ENCODE measurements at regions of chr14 and their contacts with region 1.

Region 1: DNA sequence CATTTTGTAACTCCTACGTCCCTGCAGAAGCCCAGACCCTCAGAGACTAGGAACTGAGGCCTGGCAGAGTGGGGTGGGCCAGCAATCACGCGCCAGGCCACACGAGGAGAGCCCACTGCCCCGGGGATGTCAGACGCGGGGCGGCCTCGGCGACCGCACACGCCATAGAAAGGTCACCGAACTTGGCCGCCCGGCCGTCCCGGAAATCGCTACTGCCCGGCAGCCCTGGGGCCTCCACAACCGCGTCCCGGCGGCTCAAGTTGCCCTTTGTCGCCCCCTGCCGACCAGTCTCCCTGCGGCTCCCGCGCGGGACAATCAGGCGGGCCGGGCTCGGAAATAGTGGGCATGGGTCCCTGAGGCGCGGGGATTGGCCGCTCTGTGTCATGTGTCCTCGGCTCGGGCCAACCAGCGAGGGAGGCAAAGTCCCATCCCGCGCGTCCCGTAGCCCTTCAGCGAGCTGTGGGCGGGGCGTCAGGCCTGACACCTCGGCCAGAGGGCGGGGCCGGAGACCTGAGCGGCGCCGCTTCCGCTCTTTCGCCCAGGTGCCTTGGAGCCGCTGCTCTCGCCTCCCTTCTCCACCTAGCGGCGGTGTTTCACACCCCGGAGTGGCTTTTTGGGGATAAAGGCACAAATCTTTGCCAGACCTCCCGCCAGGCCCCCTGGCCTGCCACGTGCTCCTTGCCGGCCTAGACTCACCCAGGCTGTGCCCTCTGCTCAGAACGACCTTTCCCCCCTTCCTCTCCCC is 33.4 kb upstream of the DEGS2 start:
- DNase-seq: peak; percentile 99
- H3K4me3 ChIP-seq: peak overlapping the region; percentile 36
- H3K4me3 Mint-ChIP-seq: peak overlapping the region; percentile 71
- H3K27ac Mint-ChIP-seq: peak overlapping the region; percentile 86
- H3K4me1 ChIP-seq: peaks cover 10% of the 10 kb centered on the region
- H3K4me1 Mint-ChIP-seq: peaks cover 6% of the 10 kb centered on the region
- H3K27me3 ChIP-seq: no peaks in the 10 kb centered on the region
- H3K27me3 Mint-ChIP-seq: no peaks in the 10 kb centered on the region
- CTCF ChIP-seq: peak; percentile 72 to 82

Region 2: GRCh38 chr14:99982537-99983250 is 210.2 kb before region 1 on chr14:
- CTCF ChIA-PET with region 1: interaction called, 9 read pairs
- POLR2A ChIA-PET with region 1: no interaction called
- intact Hi-C with region 1: loop called (anchors 1 kb)
- DNase-seq: peak in 1 of 2 experiments; percentile 67
- H3K4me3 ChIP-seq: no peak overlapping the region
- H3K4me3 Mint-ChIP-seq: no peak overlapping the region
- H3K27ac Mint-ChIP-seq: no peak overlapping the region
- H3K4me1 ChIP-seq: no peaks in the 10 kb centered on the region
- H3K4me1 Mint-ChIP-seq: peaks cover 7% of the 10 kb centered on the region
- H3K27me3 ChIP-seq: no peaks in the 10 kb centered on the region
- H3K27me3 Mint-ChIP-seq: no peaks in the 10 kb centered on the region
- CTCF ChIP-seq: peak; percentile 82 to 89

Region 3: GRCh38 chr14:100076133-100076532 is 116.7 kb before region 1 on chr14:
- CTCF ChIA-PET with region 1: interaction called, 7 read pairs
- POLR2A ChIA-PET with region 1: no interaction called
- intact Hi-C with region 1: loop called (anchors 1 kb)
- DNase-seq: peak; percentile 31 to 41
- H3K4me3 ChIP-seq: no peak overlapping the region
- H3K4me3 Mint-ChIP-seq: no peak overlapping the region
- H3K27ac Mint-ChIP-seq: no peak overlapping the region
- H3K4me1 ChIP-seq: no peaks in the 10 kb centered on the region
- H3K4me1 Mint-ChIP-seq: no peaks in the 10 kb centered on the region
- H3K27me3 ChIP-seq: no peaks in the 10 kb centered on the region
- H3K27me3 Mint-ChIP-seq: no peaks in the 10 kb centered on the region
- CTCF ChIP-seq: peak; percentile 22 to 29

Region 4: DNA sequence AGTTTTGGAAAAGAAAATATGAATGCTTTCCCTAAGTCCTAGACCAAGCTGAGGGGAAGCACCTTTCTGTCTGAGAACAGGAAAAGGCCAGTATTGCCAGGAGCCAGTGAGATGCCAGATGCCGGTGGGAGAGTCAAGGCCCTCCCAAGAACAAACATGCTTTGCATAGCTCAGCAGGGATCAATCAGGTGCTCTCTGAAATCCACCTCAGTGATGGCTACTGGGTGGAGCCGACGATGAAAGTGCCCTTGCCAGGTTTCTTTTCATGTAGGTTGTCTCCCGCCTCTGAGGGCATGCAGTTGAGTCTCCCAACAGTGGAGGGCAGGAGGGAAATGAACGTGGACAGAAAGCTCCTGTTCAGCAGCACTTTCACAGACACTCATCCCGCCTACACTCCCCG is 61.7 kb before region 1 on chr14:
- CTCF ChIA-PET with region 1: interaction called, 9 read pairs
- POLR2A ChIA-PET with region 1: no interaction called
- intact Hi-C with region 1: loop called (anchors 2 kb)
- DNase-seq: peak; percentile 64 to 67
- H3K4me3 ChIP-seq: no peak overlapping the region
- H3K4me3 Mint-ChIP-seq: no peak overlapping the region
- H3K27ac Mint-ChIP-seq: peak overlapping the region; percentile 44
- H3K4me1 ChIP-seq: peaks cover 15% of the 10 kb centered on the region
- H3K4me1 Mint-ChIP-seq: peaks cover 14% of the 10 kb centered on the region
- H3K27me3 ChIP-seq: no peaks in the 10 kb centered on the region
- H3K27me3 Mint-ChIP-seq: no peaks in the 10 kb centered on the region
- CTCF ChIP-seq: no peak

Region 5: GRCh38 chr14:100203949-100204834 is 11.3 kb after region 1 on chr14:
- CTCF ChIA-PET with region 1: interaction called, 19 read pairs
- POLR2A ChIA-PET with region 1: interaction called, 6 read pairs
- intact Hi-C with region 1: no loop called
- DNase-seq: peak; percentile 76 to 78
- H3K4me3 ChIP-seq: no peak overlapping the region
- H3K4me3 Mint-ChIP-seq: no peak overlapping the region
- H3K27ac Mint-ChIP-seq: peak overlapping the region; percentile 53
- H3K4me1 ChIP-seq: peaks cover 14% of the 10 kb centered on the region
- H3K4me1 Mint-ChIP-seq: no peaks in the 10 kb centered on the region
- H3K27me3 ChIP-seq: no peaks in the 10 kb centered on the region
- H3K27me3 Mint-ChIP-seq: no peaks in the 10 kb centered on the region
- CTCF ChIP-seq: no peak

Region 6: GRCh38 chr14:100221533-100222223 is 28.8 kb after region 1 on chr14:
- CTCF ChIA-PET with region 1: interaction called, 12 read pairs
- POLR2A ChIA-PET with region 1: interaction called, 5 read pairs
- intact Hi-C with region 1: no loop called
- DNase-seq: peak; percentile 60 to 63
- H3K4me3 ChIP-seq: peak overlapping the region; percentile 40
- H3K4me3 Mint-ChIP-seq: no peak overlapping the region
- H3K27ac Mint-ChIP-seq: no peak overlapping the region
- H3K4me1 ChIP-seq: peaks cover 13% of the 10 kb centered on the region; the same call in 1 of the 2 replicates
- H3K4me1 Mint-ChIP-seq: no peaks in the 10 kb centered on the region
- H3K27me3 ChIP-seq: no peaks in the 10 kb centered on the region
- H3K27me3 Mint-ChIP-seq: no peaks in the 10 kb centered on the region
- CTCF ChIP-seq: no peak

Region 7: GRCh38 chr14:100246826-100247428 is 54.1 kb after region 1 on chr14:
- CTCF ChIA-PET with region 1: interaction called, 10 read pairs
- POLR2A ChIA-PET with region 1: no interaction called
- intact Hi-C with region 1: loop called (anchors 2 kb)
- DNase-seq: peak in 1 of 2 experiments; percentile 80
- H3K4me3 ChIP-seq: no peak overlapping the region
- H3K4me3 Mint-ChIP-seq: no peak overlapping the region
- H3K27ac Mint-ChIP-seq: no peak overlapping the region
- H3K4me1 ChIP-seq: peaks cover 16% of the 10 kb centered on the region
- H3K4me1 Mint-ChIP-seq: peaks cover 9% of the 10 kb centered on the region
- H3K27me3 ChIP-seq: no peaks in the 10 kb centered on the region
- H3K27me3 Mint-ChIP-seq: no peaks in the 10 kb centered on the region
- CTCF ChIP-seq: peak; percentile 58 to 75